ENCODE measurements at regions of chr6 and their contacts with region 1.

Region 1: GRCh38 chr6:72084992-72085569 is 198.7 kb downstream of the RIMS1 start:
- DNase-seq: no peak
- H3K4me3 ChIP-seq: no peak overlapping the region
- H3K4me3 Mint-ChIP-seq: no peak overlapping the region
- H3K27ac ChIP-seq: no peak overlapping the region
- H3K27ac Mint-ChIP-seq: no peak overlapping the region
- H3K4me1 ChIP-seq: no peaks in the 10 kb centered on the region
- H3K4me1 Mint-ChIP-seq: no peaks in the 10 kb centered on the region
- H3K27me3 ChIP-seq: no peaks in the 10 kb centered on the region
- H3K27me3 Mint-ChIP-seq: peaks cover 0 to 3% (median 2%) of the 10 kb centered on the region in 3 donors
- CTCF ChIP-seq: peak; percentile 58

Region 2: DNA sequence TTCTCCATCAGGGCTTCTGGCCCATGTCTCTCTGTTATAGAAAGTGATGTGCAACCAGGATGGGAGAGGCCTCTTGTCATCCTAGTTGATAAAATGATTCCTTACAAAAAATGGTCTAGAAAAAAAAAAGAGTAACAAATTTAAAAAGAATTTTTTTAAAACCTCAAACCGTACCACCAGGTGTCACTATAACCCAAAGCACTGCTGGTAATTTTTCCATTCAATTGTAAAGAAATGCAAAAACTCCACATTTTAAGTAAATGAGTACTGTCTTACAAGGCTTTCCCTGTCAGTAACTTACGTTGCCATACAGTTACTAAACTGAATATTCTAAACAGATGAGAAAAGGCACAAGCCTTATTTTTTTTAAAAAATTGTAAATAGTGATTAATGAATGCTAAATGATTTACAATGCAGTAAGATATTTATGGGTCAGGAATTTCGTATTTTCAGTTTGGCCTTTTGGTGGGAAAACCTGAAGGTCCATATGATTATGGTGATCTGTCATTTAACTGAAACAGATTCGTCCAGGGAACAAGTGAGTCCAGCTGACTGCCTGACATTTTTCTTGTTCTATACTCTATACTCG is 701.1 kb before region 1 on chr6:
- intact Hi-C with region 1: loop called in 1 of 2 experiments (anchors 10 kb)
- DNase-seq: no peak
- H3K4me3 ChIP-seq: no peak overlapping the region
- H3K4me3 Mint-ChIP-seq: no peak overlapping the region
- H3K27ac ChIP-seq: no peak overlapping the region
- H3K27ac Mint-ChIP-seq: no peak overlapping the region
- H3K4me1 ChIP-seq: no peaks in the 10 kb centered on the region
- H3K4me1 Mint-ChIP-seq: no peaks in the 10 kb centered on the region
- H3K27me3 ChIP-seq: no peaks in the 10 kb centered on the region
- H3K27me3 Mint-ChIP-seq: peaks cover 0 to 2% (median 0%) of the 10 kb centered on the region in 3 donors
- CTCF ChIP-seq: peak; percentile 64

Measured in CD14-positive monocyte (primary cell).